ENCODE measurements at regions of chr6 and their contacts with region 1.

Region 1: GRCh38 chr6:30877419-30878371 is 6.6 kb upstream of the DDR1 start:
- DNase-seq: peak; percentile 85 to 93 (median 90)
- ATAC-seq: peak; percentile 92
- H3K4me3 ChIP-seq: peak overlapping the region; percentile 23 to 32
- H3K27ac ChIP-seq: peak overlapping the region; percentile 69 to 79
- H3K4me1 ChIP-seq: peaks cover 18 to 19% of the 10 kb centered on the region in 2 donors
- H3K27me3 ChIP-seq: peaks cover 0 to 5% of the 10 kb centered on the region in 2 donors
- CTCF ChIP-seq: peak; percentile 85 to 86

Region 2: GRCh38 chr6:30730601-30731435 is 146.9 kb before region 1 on chr6:
- intact Hi-C with region 1: loop called in 1 of 2 experiments (anchors 10 kb)
- DNase-seq: peak in 3 of 4 donors; percentile 71 to 93 (median 84)
- ATAC-seq: peak; percentile 96
- H3K4me3 ChIP-seq: no peak overlapping the region
- H3K27ac ChIP-seq: no peak overlapping the region
- H3K4me1 ChIP-seq: peaks cover 0 to 56% of the 10 kb centered on the region in 2 donors
- H3K27me3 ChIP-seq: no peaks in the 10 kb centered on the region
- CTCF ChIP-seq: peak; percentile 40 to 61

Region 3: GRCh38 chr6:30828027-30828960 is 49.4 kb before region 1 on chr6:
- intact Hi-C with region 1: loop called in 1 of 2 experiments (anchors 5 kb)
- DNase-seq: peak; percentile 77 to 90 (median 86)
- ATAC-seq: peak; percentile 95
- H3K4me3 ChIP-seq: peak overlapping the region in 1 of 2 donors; percentile 4
- H3K27ac ChIP-seq: peak overlapping the region in 1 of 2 donors; percentile 87
- H3K4me1 ChIP-seq: peaks cover 0 to 50% of the 10 kb centered on the region in 2 donors
- H3K27me3 ChIP-seq: no peaks in the 10 kb centered on the region
- CTCF ChIP-seq: peak; percentile 92 to 95

Measured in left lung (tissue), 14 donors.